Mammary epithelial cell (primary cell): ENCODE measurements at regions of chr13 and their contacts with region 1.

Region 1: GRCh38 chr13:33487575-33488243 is 202.2 kb upstream of the STARD13 start:
- DNase-seq: peak; percentile 38
- H3K4me3 ChIP-seq: no peak overlapping the region
- H3K27ac ChIP-seq: no peak overlapping the region
- H3K4me1 ChIP-seq: peaks cover 10% of the 10 kb centered on the region
- H3K27me3 ChIP-seq: no peaks in the 10 kb centered on the region
- CTCF ChIP-seq: peak; percentile 31 to 40

Region 2: GRCh38 chr13:33057019-33057780 is 430.5 kb before region 1 on chr13:
- CTCF ChIA-PET with region 1: no interaction called
- dilution Hi-C with region 1: no loop called
- in situ Hi-C with region 1: no loop called
- intact Hi-C with region 1: loop called (anchors 2 kb)
- DNase-seq: peak; percentile 2
- H3K4me3 ChIP-seq: no peak overlapping the region
- H3K27ac ChIP-seq: no peak overlapping the region
- H3K4me1 ChIP-seq: no peaks in the 10 kb centered on the region
- H3K27me3 ChIP-seq: peaks cover 2% of the 10 kb centered on the region
- CTCF ChIP-seq: peak; percentile 28 to 40

Region 3: DNA sequence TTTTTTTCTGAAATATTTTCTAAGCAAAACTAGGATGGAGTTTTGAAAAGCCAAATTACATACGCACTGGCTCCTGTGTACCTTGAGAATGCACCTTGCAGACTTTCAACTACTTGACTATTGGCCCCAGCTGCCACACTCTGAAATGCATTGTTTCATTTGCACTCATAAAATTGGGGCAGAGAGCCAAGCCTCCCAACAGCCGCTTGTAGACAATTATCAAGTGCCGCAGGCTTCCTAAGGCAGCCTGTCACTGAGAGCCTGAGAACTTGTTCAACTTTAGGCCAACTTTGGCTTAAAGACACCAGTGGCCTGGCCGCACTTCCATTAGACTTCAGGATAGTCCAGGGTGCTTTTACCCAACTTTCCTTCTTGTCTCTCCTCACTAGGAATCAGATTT is 86.5 kb before region 1 on chr13:
- CTCF ChIA-PET with region 1: no interaction called
- dilution Hi-C with region 1: no loop called
- in situ Hi-C with region 1: no loop called
- intact Hi-C with region 1: no loop called
- DNase-seq: no peak
- H3K4me3 ChIP-seq: no peak overlapping the region
- H3K27ac ChIP-seq: no peak overlapping the region
- H3K4me1 ChIP-seq: no peaks in the 10 kb centered on the region
- H3K27me3 ChIP-seq: no peaks in the 10 kb centered on the region
- CTCF ChIP-seq: no peak

Region 4: GRCh38 chr13:33454844-33455705 is 32.6 kb before region 1 on chr13:
- CTCF ChIA-PET with region 1: no interaction called
- dilution Hi-C with region 1: loop called (anchors 5 kb)
- in situ Hi-C with region 1: no loop called
- intact Hi-C with region 1: no loop called
- DNase-seq: no peak
- H3K4me3 ChIP-seq: no peak overlapping the region
- H3K27ac ChIP-seq: no peak overlapping the region
- H3K4me1 ChIP-seq: no peaks in the 10 kb centered on the region
- H3K27me3 ChIP-seq: no peaks in the 10 kb centered on the region
- CTCF ChIP-seq: no peak